ENCODE measurements at regions of chr1 and their contacts with region 1.

Region 1: GRCh38 chr1:213122514-213122929 is 71.5 kb downstream of the RPS6KC1 start:
- DNase-seq: peak; percentile 40
- ATAC-seq: no peak
- H3K4me3 ChIP-seq: no peak overlapping the region
- H3K4me3 Mint-ChIP-seq: no peak overlapping the region
- H3K27ac ChIP-seq: no peak overlapping the region
- H3K27ac Mint-ChIP-seq: no peak overlapping the region
- H3K4me1 ChIP-seq: no peaks in the 10 kb centered on the region
- H3K4me1 Mint-ChIP-seq: no peaks in the 10 kb centered on the region
- H3K27me3 ChIP-seq: no peaks in the 10 kb centered on the region
- H3K27me3 Mint-ChIP-seq: no peaks in the 10 kb centered on the region
- CTCF ChIP-seq: peak; percentile 86

Region 2: GRCh38 chr1:212089560-212090163 is 1032.9 kb before region 1 on chr1:
- CTCF ChIA-PET with region 1: no interaction called
- POLR2A ChIA-PET with region 1: no interaction called
- intact Hi-C with region 1: no loop called
- DNase-seq: no peak
- ATAC-seq: no peak
- H3K4me3 ChIP-seq: no peak overlapping the region
- H3K4me3 Mint-ChIP-seq: no peak overlapping the region
- H3K27ac ChIP-seq: peak overlapping the region in 1 of 2 donors; percentile 5
- H3K27ac Mint-ChIP-seq: no peak overlapping the region
- H3K4me1 ChIP-seq: peaks cover 8% of the 10 kb centered on the region in 2 donors
- H3K4me1 Mint-ChIP-seq: peaks cover 13% of the 10 kb centered on the region
- H3K27me3 ChIP-seq: no peaks in the 10 kb centered on the region
- H3K27me3 Mint-ChIP-seq: no peaks in the 10 kb centered on the region
- CTCF ChIP-seq: no peak

Region 3: DNA sequence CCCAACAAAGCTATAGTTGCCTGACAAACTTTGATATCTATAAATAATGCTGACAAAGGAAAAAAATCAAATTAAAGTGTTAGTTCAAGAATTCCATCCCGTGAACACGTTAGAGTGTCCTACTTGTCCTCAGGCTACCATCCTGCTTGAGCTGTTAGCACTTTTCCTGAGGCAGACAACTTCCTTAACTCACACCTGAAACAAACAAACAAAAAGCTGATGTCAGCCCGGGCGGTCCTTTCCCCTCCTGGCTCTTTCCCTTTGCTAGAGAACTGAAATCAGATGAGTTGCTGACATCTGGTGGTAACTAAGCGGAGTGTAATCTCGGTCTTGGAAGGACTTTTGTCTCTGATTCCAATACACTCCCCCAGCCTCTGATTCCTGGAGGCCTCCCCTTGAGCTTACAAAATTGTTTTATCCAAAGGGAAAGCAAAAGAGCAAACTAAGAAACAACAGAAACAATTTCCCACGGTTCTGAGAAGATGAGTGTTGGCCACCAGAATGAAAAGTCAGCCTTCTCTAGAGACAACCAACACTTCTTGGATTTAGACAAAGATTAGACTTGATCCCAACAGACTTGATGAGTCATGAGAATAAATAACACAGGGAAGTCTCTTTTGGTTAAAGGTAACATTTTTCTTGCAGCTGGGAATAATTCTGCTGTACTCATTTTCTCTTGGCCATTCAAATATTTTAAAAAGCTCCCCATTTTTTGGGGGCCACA is 1000.7 kb after region 1 on chr1:
- CTCF ChIA-PET with region 1: no interaction called
- POLR2A ChIA-PET with region 1: no interaction called
- intact Hi-C with region 1: loop called (anchors 10 kb)
- DNase-seq: no peak
- ATAC-seq: no peak
- H3K4me3 ChIP-seq: no peak overlapping the region
- H3K4me3 Mint-ChIP-seq: no peak overlapping the region
- H3K27ac ChIP-seq: no peak overlapping the region
- H3K27ac Mint-ChIP-seq: no peak overlapping the region
- H3K4me1 ChIP-seq: no peaks in the 10 kb centered on the region
- H3K4me1 Mint-ChIP-seq: no peaks in the 10 kb centered on the region
- H3K27me3 ChIP-seq: peaks cover 0 to 3% (median 0%) of the 10 kb centered on the region in 4 experiments
- H3K27me3 Mint-ChIP-seq: peaks cover 14% of the 10 kb centered on the region
- CTCF ChIP-seq: no peak

Region 4: GRCh38 chr1:214623430-214623829 is 1500.9 kb after region 1 on chr1:
- CTCF ChIA-PET with region 1: no interaction called
- POLR2A ChIA-PET with region 1: no interaction called
- intact Hi-C with region 1: loop called (anchors 10 kb)
- DNase-seq: no peak
- ATAC-seq: no peak
- H3K4me3 ChIP-seq: no peak overlapping the region
- H3K4me3 Mint-ChIP-seq: no peak overlapping the region
- H3K27ac ChIP-seq: no peak overlapping the region
- H3K27ac Mint-ChIP-seq: no peak overlapping the region
- H3K4me1 ChIP-seq: no peaks in the 10 kb centered on the region
- H3K4me1 Mint-ChIP-seq: no peaks in the 10 kb centered on the region
- H3K27me3 ChIP-seq: no peaks in the 10 kb centered on the region
- H3K27me3 Mint-ChIP-seq: no peaks in the 10 kb centered on the region
- CTCF ChIP-seq: no peak

Region 5: GRCh38 chr1:214764537-214764936 is 1642.0 kb after region 1 on chr1:
- CTCF ChIA-PET with region 1: no interaction called
- POLR2A ChIA-PET with region 1: no interaction called
- intact Hi-C with region 1: no loop called
- DNase-seq: no peak
- ATAC-seq: no peak
- H3K4me3 ChIP-seq: no peak overlapping the region
- H3K4me3 Mint-ChIP-seq: no peak overlapping the region
- H3K27ac ChIP-seq: no peak overlapping the region
- H3K27ac Mint-ChIP-seq: no peak overlapping the region
- H3K4me1 ChIP-seq: no peaks in the 10 kb centered on the region
- H3K4me1 Mint-ChIP-seq: no peaks in the 10 kb centered on the region
- H3K27me3 ChIP-seq: no peaks in the 10 kb centered on the region
- H3K27me3 Mint-ChIP-seq: no peaks in the 10 kb centered on the region
- CTCF ChIP-seq: no peak